Caki2 (cell line): ENCODE measurements at regions of chr19 and their contacts with region 1.

Region 1: GRCh38 chr19:41570639-41571112 is 5.3 kb upstream of the CEACAM21 start:
- DNase-seq: peak; percentile 65

Region 2: GRCh38 chr19:41476583-41476982 is 94.1 kb before region 1 on chr19:
- in situ Hi-C with region 1: no loop called
- DNase-seq: no peak

Region 3: GRCh38 chr19:41531438-41532311 is 39.0 kb before region 1 on chr19:
- in situ Hi-C with region 1: loop called (anchors 5 kb)
- DNase-seq: peak; percentile 81